Activated CD8-positive, alpha-beta T cell treated with anti-CD3 and anti-CD28 coated beads for 36 hours (primary cell): ENCODE measurements at regions of chr11 and their contacts with region 1.

Region 1: DNA sequence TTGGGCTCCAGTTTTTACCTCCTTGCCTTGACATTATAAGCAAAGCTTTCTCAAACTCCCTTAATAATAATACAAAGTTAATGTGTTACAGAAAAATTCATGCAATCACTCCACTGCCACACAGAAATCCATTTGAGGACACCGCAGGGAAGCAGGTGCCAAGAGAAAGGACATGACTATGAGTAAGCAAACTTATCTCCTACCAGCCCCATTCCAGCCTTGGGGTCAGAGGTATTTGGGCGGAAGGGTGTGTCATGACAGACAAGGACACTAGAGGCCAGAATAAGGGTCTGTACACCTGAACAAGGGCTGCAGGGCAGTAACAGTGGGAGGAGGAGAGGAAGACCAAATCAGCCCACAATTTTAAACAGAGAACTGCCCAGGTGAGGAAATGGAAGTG is 5.9 kb downstream of the GNG3 start:
- DNase-seq: no peak
- ATAC-seq: no peak
- H3K4me3 Mint-ChIP-seq: peak overlapping the region; percentile 25
- H3K27ac Mint-ChIP-seq: peak overlapping the region; percentile 91
- H3K4me1 Mint-ChIP-seq: peaks cover 60% of the 10 kb centered on the region
- H3K27me3 Mint-ChIP-seq: no peaks in the 10 kb centered on the region
- CTCF ChIP-seq: no peak

Region 2: DNA sequence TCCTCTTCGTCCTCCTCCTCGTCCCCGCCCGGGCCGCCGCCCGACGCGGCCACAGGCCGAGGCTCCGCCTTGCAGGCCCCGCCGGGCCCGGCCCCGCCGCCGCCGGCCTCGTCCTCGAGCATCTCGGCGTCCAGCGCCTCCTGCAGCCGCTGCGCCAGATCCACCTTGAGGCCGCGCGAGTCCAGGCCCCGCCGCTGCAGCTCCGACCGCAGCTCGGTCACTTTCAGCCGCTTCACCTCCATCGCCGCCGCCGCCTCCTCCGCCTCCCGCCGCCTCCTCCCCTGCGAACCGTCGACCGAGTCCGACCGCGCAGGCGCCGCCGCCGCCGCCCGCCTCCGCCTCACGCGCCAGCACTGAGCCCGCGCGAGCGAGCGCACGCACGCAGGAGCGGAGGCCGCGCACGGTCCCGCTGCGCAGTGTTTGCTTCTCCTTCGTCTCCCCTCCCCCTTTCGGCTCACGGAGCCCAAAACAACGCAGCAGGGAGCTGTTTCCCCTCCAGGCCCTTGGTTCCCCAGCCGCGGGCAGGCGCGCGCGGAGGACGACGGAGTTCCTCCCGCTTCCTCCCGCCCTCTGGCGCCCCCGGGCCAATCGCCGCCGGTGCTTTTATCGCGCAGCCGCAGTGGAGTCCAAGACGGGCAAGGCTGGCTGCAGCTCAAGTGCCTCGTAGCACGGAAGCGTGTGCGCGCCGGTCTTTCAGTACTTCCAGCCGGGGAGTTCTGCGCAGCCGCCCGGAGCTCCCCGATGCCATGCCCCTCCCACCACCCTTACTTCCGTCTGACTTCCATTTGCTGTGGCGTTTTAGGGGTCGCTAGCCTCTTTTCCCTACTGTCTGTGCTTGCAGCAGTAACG is 13.8 kb after region 1 on chr11 and contains the start of gene HNRNPUL2:
- CTCF ChIA-PET with region 1: interaction called, 5 read pairs
- POLR2A ChIA-PET with region 1: interaction called, 39 read pairs
- intact Hi-C with region 1: no loop called
- DNase-seq: peak; percentile 98
- ATAC-seq: peak; percentile 92
- H3K4me3 Mint-ChIP-seq: peak within 1 kb of the TSS; percentile 95
- H3K27ac Mint-ChIP-seq: peak within 1 kb of the TSS; percentile 99
- H3K4me1 Mint-ChIP-seq: peaks cover 43% of the 10 kb centered on the region
- H3K27me3 Mint-ChIP-seq: no peaks in the 10 kb centered on the region
- CTCF ChIP-seq: no peak
- total RNA-seq, gene HNRNPUL2: 54.9 to 58.6 TPM

Region 3: GRCh38 chr11:62737196-62737595 is 23.9 kb after region 1 on chr11:
- CTCF ChIA-PET with region 1: no interaction called
- POLR2A ChIA-PET with region 1: no interaction called
- intact Hi-C with region 1: no loop called
- DNase-seq: no peak
- ATAC-seq: no peak
- H3K4me3 Mint-ChIP-seq: no peak overlapping the region
- H3K27ac Mint-ChIP-seq: no peak overlapping the region
- H3K4me1 Mint-ChIP-seq: peaks cover 5% of the 10 kb centered on the region
- H3K27me3 Mint-ChIP-seq: no peaks in the 10 kb centered on the region
- CTCF ChIP-seq: no peak